ENCODE measurements at regions of chr19 and their contacts with region 1.

Region 1: DNA sequence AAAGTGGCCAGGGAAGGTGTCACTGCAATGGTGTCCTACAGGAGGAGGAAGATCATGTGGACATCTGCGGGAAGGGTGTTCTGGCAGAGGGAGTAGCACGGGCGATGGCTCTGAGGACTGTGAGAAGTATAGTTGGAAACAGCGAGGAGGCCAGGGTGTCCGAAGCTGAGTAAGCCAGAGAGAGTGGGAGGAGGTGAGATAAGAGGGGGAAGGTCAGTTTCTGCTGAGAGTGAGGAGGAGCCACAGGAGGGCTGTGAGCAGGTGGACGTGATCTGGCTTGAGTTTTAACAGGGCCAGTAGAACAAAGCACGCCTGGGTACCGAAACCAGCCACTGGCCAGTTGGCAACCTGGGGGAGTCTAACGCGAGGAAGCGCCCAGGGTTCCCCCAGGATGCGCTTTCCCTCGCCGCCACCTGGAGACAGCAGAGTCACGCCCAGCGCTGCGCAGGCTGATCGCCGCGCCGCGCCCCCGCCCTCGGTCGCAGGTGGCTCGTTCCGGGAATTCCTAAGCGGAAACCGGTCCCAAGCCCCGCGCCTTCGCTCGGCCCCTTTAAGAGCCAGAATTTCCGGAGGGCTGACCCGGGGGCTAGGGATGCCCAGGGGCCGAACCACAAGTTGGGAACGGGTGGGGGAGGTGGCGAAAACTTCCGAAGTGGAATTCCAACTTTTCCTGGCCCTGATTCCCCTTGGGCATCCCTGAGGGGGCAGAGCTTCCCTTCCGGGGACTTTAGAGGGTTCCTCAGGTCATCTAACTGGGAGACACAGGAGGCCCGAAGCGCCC is 1.1 kb upstream of the LSR start:
- DNase-seq: peak in 3 of 5 donors; percentile 47 to 54 (median 51)
- ATAC-seq: peak; percentile 67 to 80 (median 76)
- H3K4me3 ChIP-seq: peak overlapping the region; percentile 34 to 70 (median 58)
- H3K27ac ChIP-seq: peak overlapping the region; percentile 7 to 84 (median 64)
- H3K4me1 ChIP-seq: peaks cover 0 to 35% (median 7%) of the 10 kb centered on the region in 12 donors
- H3K27me3 ChIP-seq: peaks cover 12 to 30% (median 25%) of the 10 kb centered on the region in 9 donors
- CTCF ChIP-seq: peak in 10 of 12 donors; percentile 6 to 44 (median 35)
- POLR2A ChIP-seq: no peak

Region 2: DNA sequence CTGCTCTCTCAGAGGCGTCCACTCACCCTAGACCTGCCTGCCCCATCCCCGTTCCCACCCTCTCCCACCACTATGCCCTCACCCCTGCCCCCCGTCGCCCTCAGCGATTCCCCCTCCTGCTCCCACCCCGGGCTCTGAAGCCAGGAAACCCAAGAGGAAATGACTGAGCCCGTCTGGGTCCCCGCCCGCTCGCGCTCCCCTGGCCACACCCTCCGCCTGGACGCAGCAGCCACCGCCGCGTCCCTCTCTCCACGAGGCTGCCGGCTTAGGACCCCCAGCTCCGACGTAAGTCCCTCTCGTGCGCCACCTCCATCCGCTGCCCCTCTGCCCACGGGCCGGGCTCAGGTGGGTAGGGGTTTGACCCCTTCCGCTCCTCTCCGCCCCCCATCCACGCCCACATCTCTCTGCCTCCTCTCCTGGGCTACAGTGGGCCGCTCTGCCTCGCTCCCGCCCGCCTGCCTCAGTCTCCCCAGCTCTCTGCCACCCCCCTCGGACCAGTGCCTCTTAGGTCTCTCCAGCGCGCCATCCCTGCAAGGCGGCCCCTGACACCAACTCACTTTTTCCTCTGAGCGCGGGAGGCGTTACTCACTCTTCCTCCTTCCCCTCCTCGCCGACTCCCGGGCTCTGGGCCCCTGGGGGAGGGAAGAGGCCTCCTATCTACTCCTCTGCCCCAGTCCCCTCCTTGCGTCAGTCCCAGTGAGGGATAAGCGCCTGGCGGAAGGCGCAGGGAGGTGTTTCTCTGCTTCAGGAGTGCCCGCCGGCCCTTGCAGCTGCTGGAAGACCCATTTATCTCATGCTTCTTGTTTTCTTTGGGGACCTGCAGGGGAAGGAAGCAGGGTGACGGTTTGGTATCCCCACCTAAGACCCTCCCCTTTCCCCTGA is 93.0 kb before region 1 on chr19 and contains the start of gene FXYD5:
- intact Hi-C with region 1: loop called in 1 of 10 experiments (anchors 10 kb)
- DNase-seq: peak; percentile 75 to 85 (median 81)
- ATAC-seq: peak; percentile 65 to 95 (median 89)
- H3K4me3 ChIP-seq: peak within 1 kb of the TSS; percentile 63 to 97 (median 74)
- H3K27ac ChIP-seq: peak within 1 kb of the TSS; percentile 68 to 91 (median 79)
- H3K4me1 ChIP-seq: peaks cover 0 to 34% (median 18%) of the 10 kb centered on the region in 12 donors
- H3K27me3 ChIP-seq: peaks cover 0 to 30% (median 4%) of the 10 kb centered on the region in 9 donors
- CTCF ChIP-seq: peak in 1 of 12 donors; percentile 10
- POLR2A ChIP-seq: peak in 1 of 2 donors; percentile 50
- total RNA-seq, gene FXYD5: 15.3 to 87.9 (median 19.5) TPM